PC-3 (cell line): ENCODE measurements at regions of chr1 and their contacts with region 1.

Region 1: GRCh38 chr1:34852677-34853217 is 6.8 kb downstream of the SMIM12 start:
- DNase-seq: peak; percentile 97
- ATAC-seq: peak; percentile 96
- H3K4me3 ChIP-seq: no peak overlapping the region
- H3K27ac ChIP-seq: no peak overlapping the region
- H3K4me1 ChIP-seq: peaks cover 11% of the 10 kb centered on the region
- H3K27me3 ChIP-seq: no peaks in the 10 kb centered on the region
- CTCF ChIP-seq: peak; percentile 99

Region 2: DNA sequence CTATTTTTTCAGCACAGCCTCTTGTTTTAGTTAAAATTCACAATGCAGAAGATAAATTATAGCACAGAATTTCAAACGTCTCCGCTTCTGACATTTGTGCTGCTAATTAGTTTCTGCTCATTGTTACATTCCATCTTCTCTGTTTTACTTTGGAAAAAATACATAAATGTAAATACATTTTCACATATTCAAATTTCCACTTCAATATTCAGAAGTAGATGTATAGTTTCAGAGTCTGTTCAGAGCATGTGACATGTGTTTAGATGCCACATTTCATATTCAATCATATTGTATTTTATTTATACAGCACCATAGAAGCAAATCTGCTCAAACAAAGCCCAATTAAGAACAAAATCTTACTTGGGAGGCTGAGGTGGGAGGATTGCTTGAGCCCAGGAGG is 112.8 kb after region 1 on chr1:
- CTCF ChIA-PET with region 1: no interaction called
- POLR2A ChIA-PET with region 1: no interaction called
- intact Hi-C with region 1: no loop called
- DNase-seq: no peak
- ATAC-seq: no peak
- H3K4me3 ChIP-seq: no peak overlapping the region
- H3K27ac ChIP-seq: no peak overlapping the region
- H3K4me1 ChIP-seq: peaks cover 3% of the 10 kb centered on the region
- H3K27me3 ChIP-seq: peaks cover 12% of the 10 kb centered on the region; the same call in 1 of the 2 replicates
- CTCF ChIP-seq: no peak

Region 3: DNA sequence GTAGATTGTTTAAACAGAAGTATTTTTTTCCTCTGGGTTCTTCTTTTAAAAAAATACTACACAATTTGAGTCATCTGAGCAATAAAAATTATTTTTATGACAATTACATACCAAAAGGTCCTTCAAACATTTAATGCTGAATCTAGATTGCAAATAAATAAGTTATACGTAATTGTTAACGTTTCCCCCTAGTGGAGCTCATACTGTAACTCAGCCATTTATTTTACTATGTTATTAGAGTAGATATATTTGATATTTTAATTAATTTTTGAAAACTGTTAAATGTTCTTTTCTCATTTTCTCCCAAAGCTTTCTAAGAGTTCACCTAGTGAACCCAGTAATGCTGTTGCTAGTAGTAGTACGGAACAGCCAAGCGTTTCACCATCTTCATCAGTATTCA is 259.9 kb after region 1 on chr1:
- CTCF ChIA-PET with region 1: interaction called, 3 read pairs
- POLR2A ChIA-PET with region 1: no interaction called
- intact Hi-C with region 1: loop called (anchors 10 kb)
- DNase-seq: peak; percentile 31
- ATAC-seq: peak; percentile 13; the same call in 1 of the 2 replicates
- H3K4me3 ChIP-seq: no peak overlapping the region
- H3K27ac ChIP-seq: no peak overlapping the region
- H3K4me1 ChIP-seq: peaks cover 13% of the 10 kb centered on the region
- H3K27me3 ChIP-seq: no peaks in the 10 kb centered on the region
- CTCF ChIP-seq: peak; percentile 40; the same call in 1 of the 2 replicates